AG04449 (cell line): ENCODE measurements at regions of chr1 and their contacts with region 1.

Region 1: DNA sequence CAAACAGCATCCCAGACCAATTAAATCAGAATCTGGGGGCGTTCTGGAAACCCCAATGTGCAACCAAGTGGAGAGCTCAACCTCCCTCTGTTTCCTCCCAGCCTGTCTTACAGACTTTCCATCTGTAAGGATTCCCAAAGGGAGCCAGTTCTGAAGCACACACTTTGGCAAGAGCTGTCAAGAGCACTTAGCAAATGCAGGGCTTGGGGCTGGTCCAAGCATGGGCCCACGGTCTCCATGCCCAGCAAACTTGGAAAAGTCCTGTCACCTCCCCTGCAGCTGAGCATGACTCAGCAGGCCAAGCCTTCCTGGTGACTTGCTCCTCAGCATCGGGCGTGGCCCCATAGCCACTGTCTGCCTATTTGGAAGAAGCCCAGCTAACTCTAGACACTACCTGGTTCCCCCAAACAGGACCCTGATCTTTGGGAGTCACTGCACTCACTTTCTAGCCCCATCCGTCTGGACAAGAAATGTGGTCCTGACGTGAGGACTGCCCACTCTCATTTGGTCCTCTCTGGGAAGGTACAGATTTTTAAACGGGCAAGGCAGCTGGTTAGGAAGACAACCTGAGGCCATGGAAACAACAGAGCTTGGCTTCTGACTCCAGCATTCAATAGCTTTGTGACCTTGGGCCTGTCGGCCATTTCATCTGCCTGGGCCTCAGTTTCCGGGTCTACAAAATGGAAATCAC is 16.9 kb downstream of the SLC2A1 start:
- DNase-seq: no peak
- H3K4me3 ChIP-seq: no peak overlapping the region
- CTCF ChIP-seq: no peak

Region 2: GRCh38 chr1:42886800-42887199 is 55.0 kb before region 1 on chr1:
- CTCF ChIA-PET with region 1: no interaction called
- POLR2A ChIA-PET with region 1: no interaction called
- DNase-seq: no peak
- H3K4me3 ChIP-seq: no peak overlapping the region
- CTCF ChIP-seq: no peak

Region 3: GRCh38 chr1:42952303-42953001 is 10.7 kb after region 1 on chr1:
- CTCF ChIA-PET with region 1: interaction called, 6 read pairs
- POLR2A ChIA-PET with region 1: interaction called, 14 read pairs
- DNase-seq: no peak
- H3K4me3 ChIP-seq: no peak overlapping the region
- CTCF ChIP-seq: no peak